Colonic mucosa (tissue), 4 donors: ENCODE measurements at regions of chr10 and their contacts with region 1.

Region 1: DNA sequence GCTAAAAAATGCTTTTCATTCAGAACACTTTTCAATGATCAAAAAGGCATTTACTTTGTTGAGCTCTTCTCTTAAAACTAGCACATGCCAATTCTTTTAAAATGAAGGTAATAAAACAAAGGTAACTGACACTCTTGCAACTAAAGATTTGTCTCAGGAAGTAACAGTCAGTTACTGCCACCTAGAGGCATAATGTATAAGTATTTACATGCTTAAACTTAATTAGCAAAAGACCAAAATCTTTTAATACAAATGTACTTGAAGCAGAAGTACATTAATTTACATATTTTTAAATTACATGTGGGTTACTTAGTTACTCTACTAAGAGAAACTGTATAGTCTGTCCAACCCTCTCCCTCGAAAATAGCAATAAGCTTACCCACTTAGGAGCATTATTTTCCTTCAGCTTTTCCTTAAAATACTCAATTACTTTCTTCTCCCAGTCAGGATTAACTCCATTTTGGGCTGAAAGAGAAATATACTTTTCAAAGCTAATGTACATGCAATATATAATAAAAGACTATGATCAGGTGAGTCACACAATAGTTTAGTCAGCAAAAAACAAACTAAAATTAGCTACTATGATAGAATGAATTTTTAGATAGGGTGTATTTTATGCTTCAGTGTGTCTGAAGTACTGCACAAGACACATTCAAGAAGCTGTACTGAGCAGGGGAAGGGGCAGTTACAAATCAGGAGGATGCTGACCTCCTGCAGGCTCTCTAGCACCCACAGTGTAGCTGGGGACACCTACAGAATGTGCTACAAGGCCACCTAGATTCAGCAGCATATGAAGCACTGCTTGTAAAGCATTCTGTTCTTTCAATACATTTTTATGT is 13.0 kb downstream of the MCMBP start:
- DNase-seq: no peak
- H3K4me3 ChIP-seq: no peak overlapping the region
- H3K27ac ChIP-seq: no peak overlapping the region
- H3K4me1 ChIP-seq: no peaks in the 10 kb centered on the region
- H3K27me3 ChIP-seq: no peaks in the 10 kb centered on the region
- CTCF ChIP-seq: peak; percentile 58

Region 2: GRCh38 chr10:119608316-119609155 is 251.1 kb before region 1 on chr10:
- intact Hi-C with region 1: loop called (anchors 10 kb)
- DNase-seq: peak; percentile 51
- H3K4me3 ChIP-seq: no peak overlapping the region
- H3K27ac ChIP-seq: no peak overlapping the region
- H3K4me1 ChIP-seq: no peaks in the 10 kb centered on the region
- H3K27me3 ChIP-seq: no peaks in the 10 kb centered on the region
- CTCF ChIP-seq: peak; percentile 44

Region 3: DNA sequence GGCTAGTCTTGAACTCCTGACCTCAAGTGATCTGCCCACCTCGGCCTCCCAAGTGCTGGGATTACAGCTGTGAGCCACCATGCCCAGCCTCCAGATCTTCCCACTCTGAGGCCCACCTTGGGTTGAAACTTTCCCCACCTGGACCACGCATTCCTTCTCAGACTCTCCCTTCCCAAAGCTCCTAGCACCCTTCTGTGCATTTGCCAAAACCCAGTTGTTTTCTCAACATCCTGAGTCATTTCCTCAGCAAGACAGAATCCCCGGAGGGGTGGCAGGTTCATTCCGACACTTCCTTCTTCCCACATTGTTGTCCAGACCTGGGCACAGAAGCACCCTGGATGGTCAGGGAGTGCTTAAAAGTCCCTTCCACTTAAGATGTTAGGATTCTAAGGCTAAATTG is 179.6 kb before region 1 on chr10:
- intact Hi-C with region 1: loop called (anchors 5 kb)
- DNase-seq: no peak
- H3K4me3 ChIP-seq: no peak overlapping the region
- H3K27ac ChIP-seq: no peak overlapping the region
- H3K4me1 ChIP-seq: no peaks in the 10 kb centered on the region
- H3K27me3 ChIP-seq: no peaks in the 10 kb centered on the region
- CTCF ChIP-seq: no peak

Region 4: DNA sequence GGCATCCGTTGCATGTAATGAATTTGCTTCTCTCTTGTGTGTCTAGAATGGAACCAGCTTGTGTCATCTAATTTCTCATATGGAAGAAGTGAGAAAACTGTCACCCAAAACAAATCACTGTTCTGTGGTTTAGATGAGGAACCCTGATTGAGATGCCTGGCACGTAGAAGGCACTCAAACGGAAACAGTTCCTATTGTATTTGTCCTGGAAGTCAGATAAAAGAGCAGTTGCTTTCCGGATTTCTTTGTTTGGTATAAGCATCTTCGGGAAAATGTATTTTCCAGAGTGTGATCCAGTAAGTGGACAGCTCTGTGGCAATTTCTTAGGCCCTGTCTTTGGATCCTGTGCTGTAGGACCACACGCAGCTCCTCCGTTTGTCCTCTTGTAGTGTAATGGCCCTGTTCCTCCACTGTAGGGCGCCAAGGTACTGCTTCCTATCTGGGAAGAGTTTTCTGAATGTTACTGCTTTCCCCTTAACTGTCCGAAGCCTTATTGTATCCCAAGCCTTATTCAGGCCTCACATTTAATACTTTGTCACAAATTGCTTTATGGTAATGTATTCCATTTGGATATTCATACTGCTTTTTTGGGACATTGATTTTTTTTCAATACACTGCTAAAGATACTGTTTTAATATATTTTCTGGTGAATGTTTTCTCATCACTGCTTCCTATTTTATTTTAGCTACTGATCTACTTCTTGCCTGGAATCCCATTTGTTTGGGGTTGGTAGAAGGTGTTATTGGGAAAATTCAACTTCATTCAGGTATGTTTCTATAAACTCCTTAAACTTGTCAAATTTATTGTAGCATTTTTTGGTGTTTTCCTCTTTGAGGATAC is 109.0 kb before region 1 on chr10:
- intact Hi-C with region 1: loop called (anchors 2 kb)
- DNase-seq: peak; percentile 73
- H3K4me3 ChIP-seq: no peak overlapping the region
- H3K27ac ChIP-seq: no peak overlapping the region
- H3K4me1 ChIP-seq: no peaks in the 10 kb centered on the region
- H3K27me3 ChIP-seq: no peaks in the 10 kb centered on the region
- CTCF ChIP-seq: peak; percentile 88

Region 5: DNA sequence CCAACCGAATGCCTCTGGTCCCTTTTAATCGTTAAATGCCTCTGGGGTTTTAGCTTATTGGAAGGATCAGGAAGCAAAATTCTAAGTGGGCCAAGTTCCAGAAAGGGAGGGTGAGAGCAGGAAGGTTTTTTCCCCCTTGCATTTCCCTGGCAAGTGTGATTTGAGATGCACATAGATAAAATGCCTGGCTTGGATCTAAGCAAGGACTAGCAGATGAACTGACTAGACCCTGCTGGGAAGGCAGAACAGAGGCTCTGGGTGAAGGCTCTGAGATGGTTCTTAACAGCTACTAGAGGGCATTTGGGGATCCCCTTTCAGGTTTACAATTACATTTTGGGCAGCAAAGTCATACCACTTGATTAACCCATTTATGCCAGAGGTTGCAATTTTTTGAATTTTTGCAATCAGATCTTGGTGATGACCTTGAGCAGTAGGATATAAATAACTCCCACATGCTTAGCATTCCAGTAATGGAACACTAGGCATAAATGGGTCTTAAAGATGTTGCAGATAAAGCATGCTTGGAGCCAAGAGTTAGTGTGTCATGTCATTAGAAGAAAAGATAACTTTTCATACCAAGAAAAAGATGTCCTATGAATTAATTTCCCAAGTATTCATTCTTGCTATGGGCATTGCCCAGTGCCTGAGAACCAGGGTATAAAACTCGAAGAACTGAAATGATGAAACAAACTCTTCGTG is 238.7 kb after region 1 on chr10:
- intact Hi-C with region 1: no loop called
- DNase-seq: no peak
- H3K4me3 ChIP-seq: no peak overlapping the region
- H3K27ac ChIP-seq: no peak overlapping the region
- H3K4me1 ChIP-seq: no peaks in the 10 kb centered on the region
- H3K27me3 ChIP-seq: no peaks in the 10 kb centered on the region
- CTCF ChIP-seq: no peak